ENCODE measurements at regions of chr6 and their contacts with region 1.

Region 1: DNA sequence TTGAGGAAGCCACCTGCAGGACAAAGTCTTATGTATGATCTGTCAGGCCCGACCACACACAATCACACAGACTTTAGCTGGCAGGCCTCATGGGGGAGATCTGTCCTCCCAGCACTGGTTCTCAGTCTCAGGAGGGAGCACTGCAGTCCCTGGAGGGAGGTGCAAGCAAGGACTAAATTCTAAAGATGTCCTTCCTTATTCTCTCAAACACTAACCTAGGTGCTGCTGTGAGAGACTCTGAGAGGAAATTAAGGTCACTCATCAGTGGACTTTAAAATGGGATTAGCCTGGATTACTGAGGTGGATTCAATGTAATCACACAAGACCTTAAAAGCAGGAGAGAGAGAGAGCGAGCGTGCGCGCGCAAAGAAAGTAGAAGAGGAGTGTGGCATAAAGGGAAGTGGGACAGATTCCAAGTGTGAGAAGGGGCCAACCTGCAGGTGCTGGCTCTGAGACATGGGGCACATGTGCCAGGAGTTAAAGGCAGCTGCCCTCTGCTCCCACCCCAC is 14.3 kb downstream of the GLO1 start:
- DNase-seq: no peak
- H3K4me3 ChIP-seq: no peak overlapping the region
- H3K27ac ChIP-seq: no peak overlapping the region
- H3K4me1 ChIP-seq: no peaks in the 10 kb centered on the region
- H3K27me3 ChIP-seq: no peaks in the 10 kb centered on the region
- CTCF ChIP-seq: no peak

Region 2: GRCh38 chr6:38413102-38413800 is 275.4 kb before region 1 on chr6:
- CTCF ChIA-PET with region 1: no interaction called
- POLR2A ChIA-PET with region 1: interaction called, 11 read pairs
- intact Hi-C with region 1: no loop called
- DNase-seq: no peak
- H3K4me3 ChIP-seq: no peak overlapping the region
- H3K27ac ChIP-seq: no peak overlapping the region
- H3K4me1 ChIP-seq: no peaks in the 10 kb centered on the region
- H3K27me3 ChIP-seq: no peaks in the 10 kb centered on the region
- CTCF ChIP-seq: no peak

Region 3: GRCh38 chr6:38773338-38773737 is 84.7 kb after region 1 on chr6:
- CTCF ChIA-PET with region 1: no interaction called
- POLR2A ChIA-PET with region 1: interaction called, 11 read pairs
- intact Hi-C with region 1: no loop called
- DNase-seq: no peak
- H3K4me3 ChIP-seq: no peak overlapping the region
- H3K27ac ChIP-seq: no peak overlapping the region
- H3K4me1 ChIP-seq: no peaks in the 10 kb centered on the region
- H3K27me3 ChIP-seq: no peaks in the 10 kb centered on the region
- CTCF ChIP-seq: peak; percentile 69